ENCODE measurements at regions of chr7 and their contacts with region 1.

Region 1: DNA sequence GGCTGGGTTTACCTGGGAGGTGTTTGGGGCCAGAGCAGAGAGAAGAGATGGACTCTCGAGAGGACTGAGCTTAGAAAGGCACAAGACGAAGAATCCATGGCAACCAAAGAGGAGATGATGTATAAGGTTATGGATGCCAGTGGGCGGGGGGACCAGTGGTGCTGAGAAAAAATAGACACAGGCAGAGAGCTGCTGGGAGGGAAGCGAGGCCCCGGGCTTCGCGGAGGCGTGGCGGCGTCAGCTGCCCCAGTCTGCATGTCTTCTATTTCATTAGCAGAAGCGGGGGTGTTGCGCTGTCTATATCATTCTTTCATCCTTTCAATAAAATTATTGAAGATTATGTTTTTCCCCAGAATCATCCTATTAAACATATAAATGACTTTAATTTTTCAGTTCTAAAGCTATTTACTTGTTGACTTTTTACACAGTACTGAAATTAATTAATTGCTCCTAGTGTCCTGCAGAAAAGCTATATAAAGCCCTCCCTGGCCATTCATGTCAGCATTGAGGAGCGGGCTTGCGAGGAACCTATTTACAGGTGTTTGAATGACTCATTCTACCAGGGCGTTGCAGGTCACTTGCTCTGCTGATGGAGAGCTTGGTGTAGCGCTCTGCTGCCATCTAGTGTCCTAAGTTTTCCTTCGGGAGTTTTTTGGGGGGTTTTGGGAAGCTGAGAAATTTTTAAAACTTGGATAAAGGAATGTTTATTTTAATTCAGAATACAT is 42.9 kb upstream of the BHLHA15 start:
- DNase-seq: peak; percentile 49
- H3K4me3 Mint-ChIP-seq: no peak overlapping the region
- H3K27ac Mint-ChIP-seq: no peak overlapping the region
- H3K4me1 Mint-ChIP-seq: no peaks in the 10 kb centered on the region
- H3K27me3 Mint-ChIP-seq: no peaks in the 10 kb centered on the region

Region 2: GRCh38 chr7:98021588-98022351 is 146.6 kb before region 1 on chr7:
- intact Hi-C with region 1: loop called (anchors 1 kb)
- DNase-seq: peak; percentile 65
- H3K4me3 Mint-ChIP-seq: no peak overlapping the region
- H3K27ac Mint-ChIP-seq: no peak overlapping the region
- H3K4me1 Mint-ChIP-seq: peaks cover 6% of the 10 kb centered on the region
- H3K27me3 Mint-ChIP-seq: no peaks in the 10 kb centered on the region

Region 3: DNA sequence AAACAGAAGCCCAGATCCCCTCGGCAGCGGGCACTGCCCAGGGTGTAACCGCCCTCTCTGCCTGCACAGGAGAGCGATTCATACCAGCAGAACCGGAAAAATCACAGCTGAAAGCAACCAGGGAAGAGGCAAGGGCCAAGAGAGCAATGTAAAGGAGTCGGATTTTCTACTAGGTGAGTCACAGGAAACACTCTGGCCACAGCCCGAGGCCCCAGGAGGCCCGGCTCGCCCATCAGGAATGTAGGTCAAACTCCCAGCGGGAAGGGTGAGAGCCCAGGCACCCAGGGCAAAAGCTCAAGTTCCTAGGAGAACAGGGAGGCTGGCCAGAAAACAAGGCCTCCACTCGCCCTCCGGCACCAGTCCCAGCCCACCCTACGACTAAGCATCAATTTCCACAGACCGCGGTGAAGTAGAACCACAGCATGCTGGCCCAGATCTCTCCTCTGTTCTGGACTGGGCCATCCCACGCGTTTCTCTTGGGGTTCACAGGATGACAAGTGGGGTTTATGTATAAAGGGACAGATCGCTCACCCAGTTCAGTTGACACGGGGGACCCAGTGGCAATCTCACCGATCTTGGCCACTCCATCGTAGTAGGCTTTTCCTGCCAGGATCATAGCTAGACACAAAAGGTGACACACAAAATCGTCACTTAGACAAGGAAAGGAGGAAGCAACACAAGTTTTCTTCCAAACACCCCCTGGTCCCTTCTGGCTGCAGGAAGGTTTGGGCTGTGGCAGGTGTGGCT is 186.3 kb after region 1 on chr7:
- intact Hi-C with region 1: no loop called
- DNase-seq: no peak
- H3K4me3 Mint-ChIP-seq: no peak overlapping the region
- H3K27ac Mint-ChIP-seq: no peak overlapping the region
- H3K4me1 Mint-ChIP-seq: no peaks in the 10 kb centered on the region
- H3K27me3 Mint-ChIP-seq: no peaks in the 10 kb centered on the region